ENCODE measurements at regions of chr11 and their contacts with region 1.

Region 1: GRCh38 chr11:14537134-14537599 is 17.0 kb upstream of the PSMA1 start:
- DNase-seq: peak; percentile 77

Region 2: DNA sequence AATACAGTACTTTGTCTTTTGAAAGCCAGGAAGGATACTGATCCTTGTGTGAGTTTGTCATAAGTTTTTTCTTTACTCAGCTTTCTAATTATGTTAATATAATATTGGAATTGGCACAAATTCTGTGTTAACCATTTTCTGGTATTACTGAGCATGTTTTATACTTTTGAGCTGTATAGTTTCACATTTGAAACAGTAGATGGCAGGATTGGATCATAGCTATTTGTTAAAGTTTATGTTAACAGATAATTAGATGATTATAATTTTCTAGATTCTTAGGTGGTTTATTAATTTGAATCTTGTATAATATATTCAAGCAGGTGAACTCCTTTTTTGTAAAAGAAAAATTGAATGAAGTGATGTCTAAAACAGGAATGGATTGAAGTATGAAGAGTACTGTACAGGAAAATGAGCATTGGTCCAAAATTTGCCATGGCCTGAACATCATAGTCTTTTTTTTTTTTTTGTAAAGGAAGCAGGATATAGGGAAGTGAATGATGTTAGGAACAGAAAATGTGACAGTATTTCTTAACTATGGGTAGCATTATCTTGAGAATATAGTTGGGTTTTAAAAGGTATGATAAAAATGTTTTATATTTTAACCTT is 252.8 kb after region 1 on chr11:
- in situ Hi-C with region 1: loop called (anchors 25 kb)
- DNase-seq: peak; percentile 24